ENCODE measurements at regions of chr12 and their contacts with region 1.

Region 1: DNA sequence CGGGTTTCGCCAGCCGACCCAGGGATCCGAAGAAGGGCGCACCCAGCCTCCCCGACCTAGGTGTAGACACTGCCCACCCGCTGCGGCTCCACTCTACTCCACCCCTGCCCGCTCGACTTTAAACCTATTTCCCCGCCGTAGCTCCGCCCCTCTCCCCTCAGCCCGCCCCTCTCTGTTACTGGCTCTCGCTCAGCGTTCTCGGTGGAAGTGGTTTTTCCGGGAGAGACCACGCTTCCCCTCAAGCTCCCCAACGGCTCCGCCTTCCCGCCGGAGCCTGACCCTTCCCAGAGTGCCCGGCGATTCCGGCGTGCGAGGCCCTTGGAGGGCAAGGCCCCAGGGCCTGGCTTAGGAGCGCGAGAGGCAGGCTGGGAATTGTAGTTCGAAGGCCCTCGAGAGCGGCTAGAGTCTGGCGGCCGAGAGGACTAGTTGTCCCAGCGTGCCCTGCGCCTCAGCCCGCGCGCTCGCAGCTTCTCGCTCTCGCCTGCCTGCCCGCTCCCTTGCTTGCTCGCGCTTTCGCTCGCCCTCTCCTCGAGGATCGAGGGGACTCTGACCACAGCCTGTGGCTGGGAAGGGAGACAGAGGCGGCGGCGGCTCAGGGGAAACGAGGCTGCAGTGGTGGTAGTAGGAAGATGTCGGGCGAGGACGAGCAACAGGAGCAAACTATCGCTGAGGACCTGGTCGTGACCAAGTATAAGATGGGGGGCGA is at the start of gene PA2G4:
- DNase-seq: peak; percentile 97
- ATAC-seq: peak; percentile 92
- H3K4me3 Mint-ChIP-seq: peak within 1 kb of the TSS; percentile 90
- H3K27ac Mint-ChIP-seq: peak within 1 kb of the TSS; percentile 95
- H3K4me1 Mint-ChIP-seq: peaks cover 46% of the 10 kb centered on the region
- H3K27me3 Mint-ChIP-seq: no peaks in the 10 kb centered on the region
- total RNA-seq, gene PA2G4: 226 to 227 TPM

Region 2: GRCh38 chr12:55926738-55927587 is 177.3 kb before region 1 on chr12:
- POLR2A ChIA-PET with region 1: interaction called, 10 read pairs
- DNase-seq: peak; percentile 93
- ATAC-seq: peak; percentile 35
- H3K4me3 Mint-ChIP-seq: peak overlapping the region; percentile 98
- H3K27ac Mint-ChIP-seq: peak overlapping the region; percentile 98
- H3K4me1 Mint-ChIP-seq: peaks cover 44% of the 10 kb centered on the region
- H3K27me3 Mint-ChIP-seq: no peaks in the 10 kb centered on the region

Region 3: GRCh38 chr12:56007564-56008559 is 96.4 kb before region 1 on chr12:
- POLR2A ChIA-PET with region 1: interaction called, 10 read pairs
- DNase-seq: peak; percentile 79
- ATAC-seq: peak; percentile 79
- H3K4me3 Mint-ChIP-seq: peak overlapping the region; percentile 86
- H3K27ac Mint-ChIP-seq: peak overlapping the region; percentile 85
- H3K4me1 Mint-ChIP-seq: peaks cover 22% of the 10 kb centered on the region
- H3K27me3 Mint-ChIP-seq: no peaks in the 10 kb centered on the region

Region 4: GRCh38 chr12:56078990-56079664 is 25.1 kb before region 1 on chr12:
- POLR2A ChIA-PET with region 1: interaction called, 47 read pairs
- DNase-seq: peak; percentile 68
- ATAC-seq: peak; percentile 62
- H3K4me3 Mint-ChIP-seq: peak overlapping the region; percentile 82
- H3K27ac Mint-ChIP-seq: no peak overlapping the region
- H3K4me1 Mint-ChIP-seq: peaks cover 10% of the 10 kb centered on the region
- H3K27me3 Mint-ChIP-seq: peaks cover 26% of the 10 kb centered on the region

Region 5: GRCh38 chr12:56117778-56118687 is 13.8 kb after region 1 on chr12 and contains the start of gene ZC3H10:
- POLR2A ChIA-PET with region 1: interaction called, 111 read pairs
- DNase-seq: peak; percentile 94
- ATAC-seq: peak; percentile 81
- H3K4me3 Mint-ChIP-seq: peak within 1 kb of the TSS; percentile 98
- H3K27ac Mint-ChIP-seq: peak within 1 kb of the TSS; percentile 99
- H3K4me1 Mint-ChIP-seq: peaks cover 24% of the 10 kb centered on the region
- H3K27me3 Mint-ChIP-seq: no peaks in the 10 kb centered on the region
- total RNA-seq, gene ZC3H10: 10.6 to 12.0 TPM

Region 6: GRCh38 chr12:56152318-56153033 is 48.2 kb after region 1 on chr12 and contains the start of gene MYL6B:
- POLR2A ChIA-PET with region 1: interaction called, 10 read pairs
- DNase-seq: peak; percentile 93
- ATAC-seq: peak; percentile 90
- H3K4me3 Mint-ChIP-seq: peak within 1 kb of the TSS; percentile 95
- H3K27ac Mint-ChIP-seq: peak within 1 kb of the TSS; percentile 100
- H3K4me1 Mint-ChIP-seq: peaks cover 36% of the 10 kb centered on the region
- H3K27me3 Mint-ChIP-seq: no peaks in the 10 kb centered on the region
- total RNA-seq, gene MYL6B: 46.6 to 47.8 TPM

Region 7: GRCh38 chr12:56212361-56212760 is 108.1 kb after region 1 on chr12:
- POLR2A ChIA-PET with region 1: no interaction called
- DNase-seq: no peak
- ATAC-seq: no peak
- H3K4me3 Mint-ChIP-seq: no peak overlapping the region
- H3K27ac Mint-ChIP-seq: no peak overlapping the region
- H3K4me1 Mint-ChIP-seq: peaks cover 5% of the 10 kb centered on the region
- H3K27me3 Mint-ChIP-seq: no peaks in the 10 kb centered on the region

Region 8: GRCh38 chr12:56286044-56286830 is 182.0 kb after region 1 on chr12:
- POLR2A ChIA-PET with region 1: no interaction called
- DNase-seq: no peak
- ATAC-seq: no peak
- H3K4me3 Mint-ChIP-seq: no peak overlapping the region
- H3K27ac Mint-ChIP-seq: peak overlapping the region; percentile 44
- H3K4me1 Mint-ChIP-seq: peaks cover 11% of the 10 kb centered on the region
- H3K27me3 Mint-ChIP-seq: no peaks in the 10 kb centered on the region

Measured in activated naive CD8-positive, alpha-beta T cell treated with anti-CD3 and anti-CD28 coated beads, Interleukin-2, amount 10 ng/mL, durations not matched to agents 7 days and 5 days (primary cell).